ENCODE measurements at regions of chr5 and their contacts with region 1.

Region 1: GRCh38 chr5:134527146-134527960 is 1.9 kb downstream of the JADE2 start:
- DNase-seq: peak; percentile 85
- H3K4me3 Mint-ChIP-seq: peak overlapping the region; percentile 92
- H3K27ac Mint-ChIP-seq: peak overlapping the region; percentile 97
- H3K4me1 Mint-ChIP-seq: peaks cover 48% of the 10 kb centered on the region
- H3K27me3 Mint-ChIP-seq: no peaks in the 10 kb centered on the region
- CTCF ChIP-seq: peak; percentile 89

Region 2: DNA sequence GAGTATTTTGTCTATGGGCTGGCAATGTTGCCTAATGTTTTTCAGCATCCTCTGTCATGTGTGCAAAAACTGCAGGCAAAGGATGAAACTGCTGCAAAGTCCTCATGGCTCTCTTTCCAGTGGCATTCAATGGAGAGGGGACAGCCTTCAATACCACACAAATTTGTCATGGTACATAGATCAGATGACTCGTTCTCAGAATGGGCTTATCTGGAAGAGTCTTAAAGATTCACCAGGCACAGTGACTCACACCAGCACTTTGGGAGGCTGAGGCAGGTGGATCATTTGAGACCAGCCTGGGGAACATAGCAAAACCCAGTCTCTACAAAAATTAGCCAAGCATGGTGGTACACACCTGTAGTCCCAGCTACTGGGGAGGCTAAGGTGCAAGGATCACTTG is 121.0 kb before region 1 on chr5:
- CTCF ChIA-PET with region 1: interaction called, 5 read pairs
- intact Hi-C with region 1: loop called (anchors 1 kb)
- DNase-seq: no peak
- H3K4me3 Mint-ChIP-seq: no peak overlapping the region
- H3K27ac Mint-ChIP-seq: no peak overlapping the region
- H3K4me1 Mint-ChIP-seq: peaks cover 32% of the 10 kb centered on the region
- H3K27me3 Mint-ChIP-seq: no peaks in the 10 kb centered on the region
- CTCF ChIP-seq: no peak

Region 3: GRCh38 chr5:134465816-134466240 is 61.5 kb before region 1 on chr5:
- CTCF ChIA-PET with region 1: interaction called, 10 read pairs
- intact Hi-C with region 1: no loop called
- DNase-seq: peak; percentile 96
- H3K4me3 Mint-ChIP-seq: peak overlapping the region; percentile 61
- H3K27ac Mint-ChIP-seq: peak overlapping the region; percentile 49
- H3K4me1 Mint-ChIP-seq: peaks cover 11% of the 10 kb centered on the region
- H3K27me3 Mint-ChIP-seq: no peaks in the 10 kb centered on the region
- CTCF ChIP-seq: no peak

Region 4: DNA sequence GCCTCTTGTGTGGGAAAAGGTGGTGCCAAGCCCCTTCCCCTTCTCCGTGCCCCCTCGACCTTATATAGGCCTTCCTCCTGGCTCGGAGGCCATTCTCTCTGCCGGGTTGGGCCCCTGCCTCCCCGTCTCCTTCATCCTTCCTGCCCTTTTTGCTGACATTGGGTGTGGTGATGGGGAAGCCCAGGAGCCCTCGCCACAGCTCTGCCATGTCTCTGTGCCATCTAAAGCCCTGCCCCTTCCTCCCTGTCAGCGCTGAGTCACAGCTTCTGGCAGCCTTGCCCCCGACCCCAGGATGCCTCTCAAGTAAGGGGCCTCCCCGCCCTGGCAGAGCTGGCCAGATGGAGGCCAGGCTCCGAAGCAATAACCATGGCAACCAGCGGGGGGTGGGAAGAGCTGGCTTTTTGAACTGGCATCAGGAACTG is 28.5 kb after region 1 on chr5:
- CTCF ChIA-PET with region 1: interaction called, 10 read pairs
- intact Hi-C with region 1: loop called (anchors 2 kb)
- DNase-seq: peak; percentile 96
- H3K4me3 Mint-ChIP-seq: no peak overlapping the region
- H3K27ac Mint-ChIP-seq: peak overlapping the region; percentile 71
- H3K4me1 Mint-ChIP-seq: peaks cover 48% of the 10 kb centered on the region
- H3K27me3 Mint-ChIP-seq: no peaks in the 10 kb centered on the region
- CTCF ChIP-seq: no peak

Region 5: DNA sequence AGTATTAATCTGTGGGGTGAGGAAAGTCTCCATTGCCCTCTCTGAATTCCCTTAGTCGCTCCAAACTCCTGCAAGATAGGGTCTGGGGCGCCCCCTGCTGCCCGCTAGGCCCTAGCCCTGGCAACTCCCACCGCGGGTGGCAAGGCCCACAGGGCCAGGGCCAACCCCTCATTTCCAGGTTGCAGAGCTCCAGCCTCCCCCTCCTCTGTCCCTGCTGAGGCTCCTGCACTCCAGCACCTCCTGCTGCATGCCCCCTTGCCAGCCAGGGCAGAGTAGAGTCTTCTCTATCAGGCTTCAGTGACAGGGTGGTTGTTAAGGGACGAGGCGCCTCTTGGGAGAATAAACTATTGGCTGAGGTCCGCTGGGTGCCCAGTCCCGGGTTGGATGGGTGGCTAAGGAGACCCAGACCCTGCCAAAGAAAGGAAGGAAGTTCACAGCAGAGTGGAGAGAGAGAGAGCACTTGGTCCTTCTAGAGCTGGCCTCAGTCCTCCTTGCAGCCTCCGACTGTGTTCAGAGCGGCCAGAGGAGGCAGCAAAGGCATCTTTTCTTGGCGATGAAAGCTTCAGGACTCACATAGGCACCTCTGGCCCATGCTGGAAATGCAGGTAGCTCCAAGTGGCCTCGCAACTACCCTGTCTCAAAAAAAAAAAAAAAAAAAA is 59.6 kb after region 1 on chr5:
- CTCF ChIA-PET with region 1: interaction called, 7 read pairs
- intact Hi-C with region 1: loop called (anchors 2 kb)
- DNase-seq: peak; percentile 97
- H3K4me3 Mint-ChIP-seq: peak overlapping the region; percentile 26
- H3K27ac Mint-ChIP-seq: no peak overlapping the region
- H3K4me1 Mint-ChIP-seq: peaks cover 29% of the 10 kb centered on the region
- H3K27me3 Mint-ChIP-seq: no peaks in the 10 kb centered on the region
- CTCF ChIP-seq: peak; percentile 90

Measured in Calu3 (cell line).